ENCODE measurements at regions of chr1 and their contacts with region 1.

Region 1: GRCh38 chr1:58515794-58516401 is 30.6 kb downstream of the OMA1 start:
- DNase-seq: peak in 1 of 2 experiments; percentile 38
- H3K4me3 ChIP-seq: no peak overlapping the region
- H3K4me3 Mint-ChIP-seq: no peak overlapping the region
- H3K27ac Mint-ChIP-seq: no peak overlapping the region
- H3K4me1 ChIP-seq: no peaks in the 10 kb centered on the region
- H3K4me1 Mint-ChIP-seq: no peaks in the 10 kb centered on the region
- H3K27me3 ChIP-seq: no peaks in the 10 kb centered on the region
- H3K27me3 Mint-ChIP-seq: no peaks in the 10 kb centered on the region
- CTCF ChIP-seq: peak; percentile 36 to 43

Region 2: DNA sequence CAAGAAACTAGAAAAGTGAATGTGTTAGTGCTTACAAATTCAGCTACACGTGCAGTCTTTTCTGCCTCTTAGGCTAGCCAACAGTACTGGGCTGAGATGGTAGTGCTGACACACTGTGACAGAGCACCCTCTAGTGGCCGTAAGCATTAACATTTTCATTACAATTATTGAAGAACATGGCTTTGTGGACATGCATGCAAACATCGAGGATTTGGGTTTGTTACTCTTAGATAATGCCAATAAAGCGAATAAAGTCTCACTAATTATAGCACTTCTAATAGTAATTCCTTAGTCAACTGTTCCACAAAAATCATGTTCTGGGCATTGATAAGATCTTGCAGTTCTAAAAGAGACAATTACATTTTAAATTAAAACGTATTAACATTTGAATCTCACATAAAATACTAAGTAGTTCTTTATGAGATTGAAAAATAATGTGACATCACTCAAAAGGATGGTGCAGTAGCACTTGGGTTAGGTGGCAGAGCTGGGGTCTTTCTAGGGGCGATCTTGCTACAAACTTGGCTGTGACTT is 136.8 kb after region 1 on chr1:
- CTCF ChIA-PET with region 1: interaction called, 3 read pairs
- POLR2A ChIA-PET with region 1: no interaction called
- intact Hi-C with region 1: loop called (anchors 1 kb)
- DNase-seq: peak; percentile 37 to 65
- H3K4me3 ChIP-seq: no peak overlapping the region
- H3K4me3 Mint-ChIP-seq: no peak overlapping the region
- H3K27ac Mint-ChIP-seq: no peak overlapping the region
- H3K4me1 ChIP-seq: 0 out of 2 replicates have a peak, but pooled peaks cover 5% of the 10 kb centered on the region
- H3K4me1 Mint-ChIP-seq: no peaks in the 10 kb centered on the region
- H3K27me3 ChIP-seq: no peaks in the 10 kb centered on the region
- H3K27me3 Mint-ChIP-seq: no peaks in the 10 kb centered on the region
- CTCF ChIP-seq: peak; percentile 48 to 62

Region 3: GRCh38 chr1:58768971-58769808 is 253.3 kb after region 1 on chr1:
- CTCF ChIA-PET with region 1: no interaction called
- POLR2A ChIA-PET with region 1: no interaction called
- intact Hi-C with region 1: loop called (anchors 5 kb)
- DNase-seq: peak; percentile 46 to 73
- H3K4me3 ChIP-seq: no peak overlapping the region
- H3K4me3 Mint-ChIP-seq: no peak overlapping the region
- H3K27ac Mint-ChIP-seq: no peak overlapping the region
- H3K4me1 ChIP-seq: no peaks in the 10 kb centered on the region
- H3K4me1 Mint-ChIP-seq: no peaks in the 10 kb centered on the region
- H3K27me3 ChIP-seq: no peaks in the 10 kb centered on the region
- H3K27me3 Mint-ChIP-seq: no peaks in the 10 kb centered on the region
- CTCF ChIP-seq: peak; percentile 65 to 71

Region 4: GRCh38 chr1:59759156-59759925 is 1243.4 kb after region 1 on chr1:
- CTCF ChIA-PET with region 1: no interaction called
- POLR2A ChIA-PET with region 1: no interaction called
- intact Hi-C with region 1: loop called (anchors 1 kb)
- DNase-seq: peak; percentile 54 to 75
- H3K4me3 ChIP-seq: no peak overlapping the region
- H3K4me3 Mint-ChIP-seq: peak overlapping the region; percentile 58
- H3K27ac Mint-ChIP-seq: no peak overlapping the region
- H3K4me1 ChIP-seq: no peaks in the 10 kb centered on the region
- H3K4me1 Mint-ChIP-seq: no peaks in the 10 kb centered on the region
- H3K27me3 ChIP-seq: no peaks in the 10 kb centered on the region
- H3K27me3 Mint-ChIP-seq: no peaks in the 10 kb centered on the region
- CTCF ChIP-seq: peak; percentile 70 to 76